ENCODE measurements at regions of chr6 and their contacts with region 1.

Region 1: GRCh38 chr6:5085193-5085647 is at the start of gene PPP1R3G:
- DNase-seq: peak; percentile 68
- H3K4me3 ChIP-seq: peak within 1 kb of the TSS; percentile 55 to 69 (median 68)
- H3K27ac ChIP-seq: no peak within 1 kb of the TSS
- H3K4me1 ChIP-seq: peaks cover 13% of the 10 kb centered on the region
- H3K27me3 ChIP-seq: peaks cover 6 to 13% of the 10 kb centered on the region in 2 experiments
- CTCF ChIP-seq: no peak
- POLR2A ChIP-seq: no peak
- total RNA-seq, gene PPP1R3G: 0.07 and 0.09 TPM in 2 replicates

Region 2: GRCh38 chr6:5003604-5004372 is 81.4 kb before region 1 on chr6 and contains the start of gene RPP40:
- CTCF ChIA-PET with region 1: interaction called, 4 read pairs
- POLR2A ChIA-PET with region 1: no interaction called
- dilution Hi-C with region 1: no loop called
- intact Hi-C with region 1: loop called (anchors 1 kb)
- DNase-seq: peak; percentile 98
- H3K4me3 ChIP-seq: peak within 1 kb of the TSS; percentile 51 to 72 (median 63)
- H3K27ac ChIP-seq: peak within 1 kb of the TSS; percentile 79
- H3K4me1 ChIP-seq: peaks cover 7% of the 10 kb centered on the region
- H3K27me3 ChIP-seq: no peaks in the 10 kb centered on the region
- CTCF ChIP-seq: peak; percentile 74 to 85
- POLR2A ChIP-seq: peak; percentile 88
- total RNA-seq, gene RPP40: 12.6 and 15.3 TPM in 2 replicates

Region 3: DNA sequence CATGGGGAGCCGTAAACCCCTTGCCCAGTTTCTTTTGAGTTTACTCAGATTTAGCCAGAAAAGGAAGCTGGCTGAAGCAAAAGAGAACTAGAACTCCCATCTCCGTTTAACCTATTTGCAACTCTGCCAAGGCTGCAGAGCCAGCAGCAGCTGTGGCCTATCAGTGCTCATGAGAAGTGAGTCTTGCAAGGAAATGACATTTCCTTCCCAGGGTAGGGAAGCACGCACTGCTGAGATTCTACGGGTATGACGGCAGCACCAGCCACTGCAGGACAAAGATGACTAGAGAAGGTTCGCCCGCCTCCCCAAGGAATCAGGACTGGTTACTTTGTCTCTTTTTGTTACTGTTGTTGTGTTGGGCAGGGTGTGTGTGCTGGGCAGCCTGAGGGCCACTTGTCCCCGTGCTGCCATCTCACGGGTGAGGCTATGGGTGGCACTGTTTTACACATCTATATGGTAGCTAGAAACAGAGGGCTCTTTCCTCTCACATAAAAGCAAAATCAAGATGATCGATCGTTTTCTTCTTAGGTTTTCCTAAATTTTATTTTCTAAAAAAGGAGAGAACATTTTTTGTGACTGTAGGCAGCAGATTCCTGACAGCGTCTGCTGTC is 47.6 kb after region 1 on chr6:
- CTCF ChIA-PET with region 1: no interaction called
- POLR2A ChIA-PET with region 1: no interaction called
- dilution Hi-C with region 1: no loop called
- intact Hi-C with region 1: loop called (anchors 2 kb)
- DNase-seq: peak; percentile 90
- H3K4me3 ChIP-seq: no peak overlapping the region
- H3K27ac ChIP-seq: peak overlapping the region; percentile 61
- H3K4me1 ChIP-seq: peaks cover 15% of the 10 kb centered on the region
- H3K27me3 ChIP-seq: no peaks in the 10 kb centered on the region
- CTCF ChIP-seq: no peak
- POLR2A ChIP-seq: no peak